Sigmoid colon (tissue), 7 donors: ENCODE measurements at regions of chr6 and their contacts with region 1.

Region 1: GRCh38 chr6:109059571-109060021 is 35.0 kb downstream of the SESN1 start:
- DNase-seq: no peak
- H3K4me3 ChIP-seq: no peak overlapping the region
- H3K27ac ChIP-seq: peak overlapping the region; percentile 49 to 74 (median 54)
- H3K4me1 ChIP-seq: peaks cover 0 to 60% (median 34%) of the 10 kb centered on the region in 4 donors
- H3K27me3 ChIP-seq: no peaks in the 10 kb centered on the region
- CTCF ChIP-seq: no peak
- EP300 ChIP-seq: no peak
- POLR2A ChIP-seq: no peak

Region 2: DNA sequence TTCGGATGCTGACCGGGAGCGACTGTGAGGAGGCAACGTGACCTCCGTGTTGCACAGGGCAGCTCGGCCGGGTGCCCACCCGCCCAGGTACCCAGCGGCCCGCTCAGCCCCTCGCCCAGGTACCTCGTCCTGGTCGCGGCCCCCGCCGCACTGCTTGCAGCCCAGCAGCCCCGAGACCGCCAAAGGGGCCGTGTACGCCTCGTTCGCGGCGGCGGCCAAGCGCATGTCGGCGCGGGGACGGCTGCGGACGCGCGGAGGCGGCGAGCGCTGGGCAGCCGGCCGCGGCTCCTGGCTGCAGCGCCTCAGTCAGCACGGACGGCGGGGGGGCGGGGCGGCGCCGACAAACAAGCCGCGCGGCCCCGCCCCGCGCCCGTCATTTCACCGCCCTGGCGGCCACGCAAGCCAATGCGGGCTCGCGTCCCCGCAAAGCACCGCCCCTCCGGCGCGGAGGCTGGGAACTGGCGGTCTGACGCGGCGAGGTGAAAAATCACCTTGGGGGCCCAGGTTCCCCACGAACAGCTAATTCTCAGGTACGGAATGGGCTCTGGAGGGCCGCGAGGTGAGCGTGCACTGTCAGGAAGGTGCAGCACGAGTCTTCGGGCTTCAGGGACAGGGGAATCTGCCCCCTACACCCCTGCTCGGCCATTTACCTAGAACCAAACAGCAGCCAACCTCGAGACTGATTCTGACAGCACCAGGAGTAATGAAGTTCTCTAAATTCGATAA is 50.2 kb before region 1 on chr6:
- intact Hi-C with region 1: loop called (anchors 5 kb)
- DNase-seq: peak; percentile 97
- H3K4me3 ChIP-seq: peak overlapping the region; percentile 93 to 98 (median 97)
- H3K27ac ChIP-seq: peak overlapping the region; percentile 92 to 98 (median 96)
- H3K4me1 ChIP-seq: peaks cover 0 to 47% (median 35%) of the 10 kb centered on the region in 4 donors
- H3K27me3 ChIP-seq: no peaks in the 10 kb centered on the region
- CTCF ChIP-seq: peak in 1 of 4 experiments; percentile 27
- EP300 ChIP-seq: no peak
- POLR2A ChIP-seq: peak; percentile 59 to 63